ENCODE measurements at regions of chr1 and their contacts with region 1.

Region 1: GRCh38 chr1:35577071-35577998 is 4.2 kb downstream of the TFAP2E start:
- DNase-seq: peak; percentile 60
- ATAC-seq: peak; percentile 84
- H3K4me3 Mint-ChIP-seq: peak overlapping the region; percentile 90
- H3K27ac Mint-ChIP-seq: peak overlapping the region; percentile 87
- H3K4me1 Mint-ChIP-seq: peaks cover 27% of the 10 kb centered on the region
- H3K27me3 Mint-ChIP-seq: peaks cover 13% of the 10 kb centered on the region
- CTCF ChIP-seq: no peak

Region 2: GRCh38 chr1:34786521-34787325 is 790.6 kb before region 1 on chr1:
- CTCF ChIA-PET with region 1: no interaction called
- POLR2A ChIA-PET with region 1: no interaction called
- intact Hi-C with region 1: no loop called
- DNase-seq: no peak
- ATAC-seq: peak; percentile 82
- H3K4me3 Mint-ChIP-seq: no peak overlapping the region
- H3K27ac Mint-ChIP-seq: no peak overlapping the region
- H3K4me1 Mint-ChIP-seq: peaks cover 7% of the 10 kb centered on the region
- H3K27me3 Mint-ChIP-seq: peaks cover 52% of the 10 kb centered on the region
- CTCF ChIP-seq: no peak

Region 3: DNA sequence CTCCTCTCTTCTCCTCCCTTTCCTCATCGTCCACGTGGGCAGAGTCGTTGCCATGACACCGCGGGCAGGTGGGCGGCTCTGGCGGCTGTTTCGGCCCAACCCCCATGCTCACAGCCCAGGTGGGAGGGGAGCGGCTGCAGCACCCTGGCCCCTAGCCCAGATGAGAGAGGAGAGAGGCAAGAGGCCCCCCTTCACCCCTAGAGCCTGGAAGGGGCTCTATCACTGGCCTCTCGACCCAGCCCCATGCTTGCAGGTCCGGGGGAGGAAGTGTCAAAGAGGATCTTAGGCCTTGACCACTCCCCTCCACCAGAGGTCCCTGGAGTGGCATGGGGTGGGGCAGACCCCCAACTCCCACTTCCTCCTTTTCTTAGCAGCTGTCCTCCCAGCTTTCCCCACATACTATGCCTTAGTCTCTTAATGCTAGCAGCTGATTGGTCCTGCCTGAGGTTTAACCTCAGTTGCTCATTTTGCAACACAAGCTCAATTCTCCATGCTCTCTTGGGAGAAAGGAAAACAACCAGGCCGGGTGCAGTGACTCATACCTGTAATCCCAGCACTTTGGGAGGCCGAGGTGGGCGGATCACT is 658.3 kb before region 1 on chr1:
- CTCF ChIA-PET with region 1: no interaction called
- POLR2A ChIA-PET with region 1: no interaction called
- intact Hi-C with region 1: no loop called
- DNase-seq: no peak
- ATAC-seq: peak; percentile 85
- H3K4me3 Mint-ChIP-seq: peak overlapping the region; percentile 33
- H3K27ac Mint-ChIP-seq: no peak overlapping the region
- H3K4me1 Mint-ChIP-seq: peaks cover 31% of the 10 kb centered on the region
- H3K27me3 Mint-ChIP-seq: peaks cover 14% of the 10 kb centered on the region
- CTCF ChIP-seq: no peak

Region 4: GRCh38 chr1:35544978-35545377 is 32.4 kb before region 1 on chr1:
- CTCF ChIA-PET with region 1: no interaction called
- POLR2A ChIA-PET with region 1: no interaction called
- intact Hi-C with region 1: no loop called
- DNase-seq: no peak
- ATAC-seq: no peak
- H3K4me3 Mint-ChIP-seq: no peak overlapping the region
- H3K27ac Mint-ChIP-seq: no peak overlapping the region
- H3K4me1 Mint-ChIP-seq: peaks cover 26% of the 10 kb centered on the region
- H3K27me3 Mint-ChIP-seq: no peaks in the 10 kb centered on the region
- CTCF ChIP-seq: no peak

Region 5: DNA sequence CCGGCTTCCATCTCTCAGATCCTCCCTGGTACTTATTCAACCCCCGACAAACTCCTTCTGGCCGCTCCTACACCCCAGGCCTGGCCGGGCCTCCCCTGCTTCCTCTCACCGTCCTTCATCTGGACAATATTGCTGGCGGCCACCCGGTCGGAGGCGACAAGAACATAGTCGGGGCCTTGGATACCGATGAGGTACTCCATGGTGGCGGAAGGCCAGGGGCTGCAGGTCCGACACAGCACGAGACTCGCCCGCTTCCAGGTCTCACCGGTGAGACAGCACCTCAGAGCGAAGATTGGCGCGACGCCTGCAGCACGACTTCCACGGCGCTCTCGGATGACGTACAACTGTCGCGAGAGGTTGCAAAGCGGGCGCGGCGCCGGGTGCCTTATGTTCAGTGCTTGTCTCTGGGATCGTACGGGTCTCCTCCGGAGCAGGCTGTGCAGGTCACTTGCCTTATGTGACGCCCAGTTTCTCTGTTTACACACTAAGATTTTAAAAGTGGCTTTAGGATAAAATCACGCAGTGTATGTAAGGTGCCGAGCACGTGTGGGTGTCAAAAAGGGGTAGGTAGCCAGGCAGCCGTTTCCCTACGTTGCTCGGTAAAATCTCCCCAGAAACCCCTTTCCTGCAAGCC is 64.0 kb after region 1 on chr1 and contains the start of gene PSMB2:
- CTCF ChIA-PET with region 1: no interaction called
- POLR2A ChIA-PET with region 1: interaction called, 10 read pairs
- intact Hi-C with region 1: loop called (anchors 1 kb)
- DNase-seq: peak; percentile 92
- ATAC-seq: peak; percentile 93
- H3K4me3 Mint-ChIP-seq: peak within 1 kb of the TSS; percentile 100
- H3K27ac Mint-ChIP-seq: peak within 1 kb of the TSS; percentile 99
- H3K4me1 Mint-ChIP-seq: peaks cover 40% of the 10 kb centered on the region
- H3K27me3 Mint-ChIP-seq: peaks cover 16% of the 10 kb centered on the region
- CTCF ChIP-seq: no peak
- total RNA-seq, gene PSMB2: 54.5 and 56.3 TPM in 2 replicates

Region 6: DNA sequence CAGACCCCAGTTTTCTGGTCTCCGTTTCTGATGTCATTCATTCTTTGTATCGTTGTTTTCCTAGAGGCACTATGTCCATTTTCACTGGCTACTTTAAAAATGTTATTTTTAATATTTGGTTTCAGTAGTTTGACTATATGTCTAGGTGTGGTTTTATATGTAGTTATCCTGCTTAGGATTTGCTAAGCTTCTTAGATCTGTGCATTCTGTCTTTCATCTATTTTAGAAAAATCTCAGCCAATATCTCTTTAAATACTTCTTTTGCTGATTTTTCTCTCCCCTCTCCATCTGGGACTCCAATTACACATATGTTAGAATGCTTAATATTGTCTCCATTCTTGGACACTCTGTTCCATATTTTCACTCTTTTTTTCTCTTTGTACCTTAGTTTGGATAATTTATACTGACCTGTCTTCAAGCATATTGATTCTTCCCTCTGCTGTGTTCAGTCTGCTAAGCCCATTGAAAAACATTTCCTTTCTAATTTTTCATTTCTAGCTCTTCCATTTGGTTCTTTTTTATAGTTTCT is 205.8 kb after region 1 on chr1:
- CTCF ChIA-PET with region 1: no interaction called
- POLR2A ChIA-PET with region 1: no interaction called
- intact Hi-C with region 1: no loop called
- DNase-seq: no peak
- ATAC-seq: no peak
- H3K4me3 Mint-ChIP-seq: no peak overlapping the region
- H3K27ac Mint-ChIP-seq: no peak overlapping the region
- H3K4me1 Mint-ChIP-seq: peaks cover 1% of the 10 kb centered on the region
- H3K27me3 Mint-ChIP-seq: no peaks in the 10 kb centered on the region
- CTCF ChIP-seq: no peak